Right ventricle myocardium inferior (tissue), 1 donor: ENCODE measurements at regions of chr22 and their contacts with region 1.

Region 1: DNA sequence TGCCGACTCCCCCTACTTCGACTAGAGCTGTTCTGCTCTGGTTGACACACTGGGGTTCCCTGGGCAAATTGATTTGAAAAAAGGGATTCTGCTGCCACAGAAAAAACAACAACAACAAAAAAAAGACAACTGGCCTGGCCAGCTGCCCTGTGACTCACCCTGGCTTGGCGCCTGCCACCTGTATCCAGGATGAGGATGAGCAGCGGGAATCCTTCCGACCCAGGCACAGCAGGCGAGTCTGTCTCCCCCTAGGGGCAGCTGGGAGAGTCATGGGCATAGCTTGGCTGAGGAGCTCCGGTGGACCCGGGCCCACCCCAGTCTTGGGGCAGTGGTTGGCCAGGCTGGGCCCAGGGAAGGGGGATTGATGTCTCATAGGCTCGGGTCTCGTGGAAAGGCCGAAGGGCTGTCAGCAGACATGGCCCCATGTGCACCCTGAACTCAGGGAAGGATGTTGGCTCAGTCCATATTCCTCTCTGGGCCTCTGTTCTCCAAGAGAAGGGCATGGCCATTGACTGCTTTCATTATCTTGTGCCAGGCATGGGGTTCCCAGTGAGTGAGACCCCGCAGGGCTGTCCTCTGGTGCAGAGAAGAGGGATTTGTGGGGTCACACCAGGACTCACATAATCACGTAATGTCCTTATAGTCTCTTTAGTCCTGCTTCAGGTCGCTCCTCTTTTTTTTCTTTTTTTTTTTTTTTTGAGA is 10.4 kb upstream of the SUN2 start:
- DNase-seq: peak; percentile 65
- ATAC-seq: peak; percentile 45

Region 2: GRCh38 chr22:38788021-38788816 is 22.0 kb after region 1 on chr22:
- intact Hi-C with region 1: no loop called
- DNase-seq: no peak
- ATAC-seq: peak; percentile 85

Region 3: DNA sequence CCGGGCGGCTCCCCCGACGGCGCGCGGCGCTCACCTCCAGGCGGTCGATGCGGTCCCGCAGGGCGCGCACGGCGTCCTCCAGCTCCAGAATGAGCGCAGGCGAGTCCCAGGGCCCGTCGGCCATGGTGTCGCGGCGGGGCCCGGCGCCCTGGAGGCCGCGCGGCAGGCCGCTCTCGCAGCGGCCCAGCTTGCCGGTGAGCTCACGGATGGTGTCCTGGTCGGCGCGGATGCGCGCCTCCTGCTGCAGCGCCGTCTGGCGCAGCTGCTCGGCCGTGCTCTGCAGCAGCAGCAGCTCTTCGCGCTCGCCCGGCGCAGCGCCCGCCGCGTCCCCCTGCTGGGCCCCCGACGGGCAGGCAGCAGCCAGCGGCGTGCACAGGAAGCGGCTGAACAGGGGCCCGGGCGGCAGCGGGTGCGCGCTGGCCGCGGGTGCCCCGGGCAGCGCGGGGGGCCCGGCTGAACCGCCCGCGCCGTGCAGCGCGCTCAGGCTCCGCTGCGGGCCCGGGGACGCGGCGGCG is 77.0 kb after region 1 on chr22:
- intact Hi-C with region 1: loop called (anchors 2 kb)
- DNase-seq: peak; percentile 69
- ATAC-seq: peak; percentile 72

Region 4: DNA sequence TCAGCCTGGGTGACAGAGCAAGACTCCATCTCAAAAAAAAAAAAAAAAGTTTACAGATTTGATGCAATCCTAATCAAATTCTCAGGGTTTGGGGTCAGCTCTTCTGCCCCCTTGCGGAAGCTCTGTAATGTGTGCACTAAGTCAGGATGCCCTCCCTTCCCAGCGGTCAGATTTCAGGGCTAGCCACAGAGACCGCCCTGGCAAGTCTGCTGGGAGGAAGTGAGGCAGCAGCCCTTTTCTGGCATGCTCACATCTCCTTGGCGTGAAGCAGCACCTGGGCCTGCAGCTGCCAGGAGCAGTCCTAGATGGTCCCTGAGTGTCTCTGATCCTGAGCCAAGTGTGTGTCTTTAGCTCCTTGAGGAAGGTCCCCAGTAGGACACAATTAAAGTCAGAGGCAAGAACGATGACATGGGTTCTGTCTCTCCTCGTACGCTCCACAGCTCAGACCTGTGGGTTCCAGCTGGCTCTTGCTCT is 237.0 kb after region 1 on chr22:
- intact Hi-C with region 1: loop called (anchors 2 kb)
- DNase-seq: peak; percentile 85
- ATAC-seq: peak; percentile 89

Region 5: DNA sequence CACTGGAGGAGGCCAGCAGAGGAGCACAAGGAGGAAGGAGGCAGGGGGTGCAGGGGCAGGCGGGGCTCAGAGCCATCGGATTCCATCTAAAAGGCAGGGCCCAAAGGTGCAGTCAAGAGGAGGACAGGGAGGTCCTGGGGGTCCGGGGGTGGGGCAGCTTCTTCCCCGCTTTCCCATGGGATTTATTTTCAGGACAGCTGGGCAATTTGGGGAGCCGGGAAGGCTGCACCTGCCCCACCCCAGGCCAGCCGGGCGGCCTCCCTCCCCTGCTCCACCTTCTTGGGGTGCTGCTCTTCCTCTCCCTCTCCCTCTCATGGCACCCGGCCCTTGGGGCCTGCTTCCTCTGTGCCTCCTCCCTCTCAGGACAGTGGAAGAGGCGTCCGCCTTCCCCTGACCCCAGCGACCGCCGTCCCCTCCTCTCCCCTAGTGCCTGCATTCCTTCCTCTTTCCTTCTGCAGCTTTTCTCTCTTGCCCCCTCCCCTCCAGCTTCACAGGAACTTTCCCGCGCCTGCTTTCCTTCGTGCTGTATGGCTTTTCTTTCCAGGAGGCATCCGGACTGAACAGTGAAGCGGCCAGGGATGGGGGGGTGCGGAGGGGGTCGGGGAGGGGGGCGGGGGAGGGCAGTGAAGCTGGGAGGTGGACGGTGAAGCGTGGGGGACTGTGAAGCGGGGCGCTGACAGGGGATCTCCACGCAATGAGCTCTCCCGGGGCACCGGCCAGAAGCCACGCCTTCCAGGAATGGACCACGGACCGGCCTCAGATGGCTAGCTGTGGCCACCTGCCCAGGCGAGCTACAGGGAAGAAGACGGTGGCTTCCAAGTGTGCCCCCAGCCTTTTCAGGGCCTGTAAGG is 357.7 kb after region 1 on chr22:
- intact Hi-C with region 1: loop called (anchors 5 kb)
- DNase-seq: no peak
- ATAC-seq: no peak